GM13976 (cell line): ENCODE measurements at regions of chr1 and their contacts with region 1.

Region 1: GRCh38 chr1:30718636-30719405 is 4.6 kb downstream of the MATN1 start:
- DNase-seq: peak; percentile 76
- CTCF ChIP-seq: peak; percentile 90

Region 2: DNA sequence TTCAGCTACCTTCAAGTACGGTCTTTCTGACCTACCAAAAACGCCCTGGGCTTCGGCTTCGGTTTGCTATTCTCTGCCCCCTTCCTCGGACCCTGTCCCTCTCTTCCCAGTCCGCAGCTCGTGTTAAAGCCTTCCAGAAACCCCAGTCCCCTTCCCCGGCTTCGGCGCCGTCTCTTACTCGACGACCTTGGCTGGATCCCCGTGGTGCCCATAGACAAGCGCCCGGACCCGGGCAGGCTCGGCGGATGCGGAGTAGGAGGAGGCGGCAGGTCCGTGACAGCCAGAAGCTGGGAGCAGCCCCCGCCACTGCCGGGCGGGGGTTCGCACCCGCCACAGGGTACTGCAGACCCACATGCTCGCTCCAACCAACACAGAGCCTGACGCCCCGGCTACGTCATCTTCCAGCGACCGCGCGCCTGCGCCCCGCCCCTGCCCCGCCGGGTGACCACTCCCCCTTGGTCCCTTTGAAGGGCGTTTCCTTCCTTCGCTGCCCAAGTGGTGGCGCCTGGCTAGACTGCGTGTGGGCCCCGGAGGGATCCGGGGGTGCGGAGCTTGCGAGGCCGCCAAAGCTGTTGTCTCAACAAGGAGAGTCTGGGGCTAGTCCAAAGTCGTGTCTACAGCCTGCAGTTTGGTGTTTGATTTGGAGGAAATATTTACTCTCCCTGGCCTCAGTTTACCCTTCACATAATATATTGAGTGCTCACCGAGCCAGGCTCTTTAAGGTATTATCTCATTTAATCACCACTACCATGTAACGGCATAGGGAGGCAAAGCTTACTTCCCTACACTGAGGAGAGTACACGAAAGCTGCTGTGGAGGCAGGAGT is 1488.1 kb before region 1 on chr1 and contains the start of gene MECR:
- in situ Hi-C with region 1: loop called (anchors 25 kb)
- DNase-seq: peak; percentile 98
- CTCF ChIP-seq: peak; percentile 19

Region 3: GRCh38 chr1:30489737-30490389 is 229.0 kb before region 1 on chr1:
- in situ Hi-C with region 1: no loop called
- DNase-seq: no peak
- CTCF ChIP-seq: no peak

Region 4: GRCh38 chr1:30911046-30911954 is 192.5 kb after region 1 on chr1:
- in situ Hi-C with region 1: loop called (anchors 10 kb)
- DNase-seq: peak; percentile 81
- CTCF ChIP-seq: peak; percentile 73